Posterior cingulate gyrus (tissue), 11 donors: ENCODE measurements at regions of chr5 and their contacts with region 1.

Region 1: GRCh38 chr5:134586866-134587524 is 45.6 kb downstream of the SAR1B start:
- DNase-seq: peak; percentile 56 to 96 (median 80)

Region 2: GRCh38 chr5:134184155-134185135 is 402.6 kb before region 1 on chr5:
- intact Hi-C with region 1: loop called (anchors 10 kb)
- DNase-seq: peak in 9 of 10 donors; percentile 32 to 95 (median 73)

Region 3: DNA sequence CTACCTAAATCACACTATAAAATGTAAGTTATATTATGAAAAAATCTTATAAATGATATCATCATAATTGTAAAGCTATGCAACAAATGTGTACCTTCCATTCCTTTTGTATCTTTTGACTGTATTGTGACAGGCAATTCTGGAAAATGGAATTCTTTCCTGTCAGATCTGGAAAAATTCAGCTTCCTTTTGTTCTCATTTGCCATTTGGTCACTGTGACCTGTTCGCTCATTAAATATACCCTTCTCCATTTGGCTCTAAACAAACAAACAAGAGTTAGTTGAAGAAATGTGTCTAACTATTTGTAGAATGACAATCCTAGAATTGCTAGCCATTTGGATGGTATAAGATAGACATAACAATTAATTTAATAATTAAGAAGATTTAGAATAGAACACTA is 282.7 kb before region 1 on chr5:
- intact Hi-C with region 1: loop called (anchors 2 kb)
- DNase-seq: no peak